ENCODE measurements at regions of chr2 and their contacts with region 1.

Region 1: DNA sequence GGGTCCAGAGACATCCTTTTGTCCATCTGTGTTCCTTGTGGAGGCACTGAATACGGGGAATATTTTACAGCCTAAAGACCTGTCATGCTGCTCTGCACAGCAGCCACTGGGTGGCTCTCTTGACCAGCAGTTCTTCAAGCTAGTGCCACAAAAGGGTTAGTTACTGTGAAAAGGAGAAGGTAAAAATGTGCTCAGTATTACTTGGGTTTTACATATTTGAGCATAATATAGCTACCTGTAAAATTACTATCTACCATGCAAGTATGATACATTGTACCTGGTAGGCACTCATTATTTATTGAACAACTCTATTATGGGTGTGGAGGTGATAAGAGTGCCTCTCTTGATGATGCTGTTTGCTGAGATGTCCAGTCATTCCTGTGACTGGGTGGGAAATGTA is 23.6 kb downstream of the FZD5 start:
- DNase-seq: peak in 8 of 14 experiments; percentile 20 to 71 (median 44)
- ATAC-seq: peak; percentile 63
- H3K4me3 ChIP-seq: no peak overlapping the region
- H3K4me3 Mint-ChIP-seq: no peak overlapping the region
- H3K27ac ChIP-seq: no peak overlapping the region
- H3K27ac Mint-ChIP-seq: no peak overlapping the region
- H3K4me1 ChIP-seq: no peaks in the 10 kb centered on the region
- H3K4me1 Mint-ChIP-seq: no peaks in the 10 kb centered on the region
- H3K27me3 ChIP-seq: no peaks in the 10 kb centered on the region
- H3K27me3 Mint-ChIP-seq: no peaks in the 10 kb centered on the region
- CTCF ChIP-seq: peak; percentile 77

Region 2: DNA sequence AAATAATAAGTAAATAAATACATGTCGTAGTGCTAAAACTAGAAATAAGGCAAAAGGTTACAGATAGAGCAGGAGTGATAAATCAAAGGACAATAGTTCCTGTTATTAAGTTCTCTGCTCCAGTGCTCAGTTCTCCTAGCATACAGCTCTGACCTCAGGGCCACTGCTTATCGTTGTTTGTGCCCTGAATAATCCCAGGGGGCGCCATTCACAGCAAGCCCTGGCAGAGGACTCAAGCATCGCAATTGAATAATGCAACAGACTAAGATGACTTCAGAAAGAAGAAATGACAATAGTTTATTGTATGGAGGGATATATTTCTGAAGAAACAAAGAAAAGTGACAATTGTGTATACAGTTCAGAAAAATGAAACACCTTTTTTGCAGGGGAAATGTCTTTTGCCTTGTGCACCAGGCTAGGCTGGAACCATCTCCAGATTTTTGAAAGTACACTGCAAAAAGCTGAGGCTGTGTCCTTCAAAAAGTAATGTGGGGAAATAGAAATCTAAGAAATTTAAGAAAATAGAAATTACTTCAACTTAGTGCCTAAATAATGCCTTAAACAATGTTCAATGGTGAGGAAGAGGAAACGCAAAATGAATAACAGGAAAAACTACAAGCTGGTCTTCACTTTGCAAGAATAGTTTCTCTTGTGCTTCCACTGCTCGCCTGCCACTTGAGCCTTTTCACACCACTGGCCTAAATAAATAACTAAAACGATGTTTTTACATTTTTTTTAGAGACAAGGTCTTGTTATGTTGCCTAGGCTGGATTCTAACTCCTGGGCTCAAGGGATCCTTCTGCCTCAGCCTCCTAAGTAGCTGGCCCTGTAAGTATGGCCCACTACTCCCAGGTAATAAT is 53.7 kb before region 1 on chr2:
- CTCF ChIA-PET with region 1: no interaction called
- POLR2A ChIA-PET with region 1: no interaction called
- intact Hi-C with region 1: loop called in 1 of 2 experiments (anchors 5 kb)
- DNase-seq: peak; percentile 16 to 73 (median 37)
- ATAC-seq: peak; percentile 60
- H3K4me3 ChIP-seq: no peak overlapping the region
- H3K4me3 Mint-ChIP-seq: no peak overlapping the region
- H3K27ac ChIP-seq: no peak overlapping the region
- H3K27ac Mint-ChIP-seq: no peak overlapping the region
- H3K4me1 ChIP-seq: no peaks in the 10 kb centered on the region
- H3K4me1 Mint-ChIP-seq: peaks cover 5% of the 10 kb centered on the region
- H3K27me3 ChIP-seq: no peaks in the 10 kb centered on the region
- H3K27me3 Mint-ChIP-seq: no peaks in the 10 kb centered on the region
- CTCF ChIP-seq: peak; percentile 73

Region 3: GRCh38 chr2:207782238-207783030 is 36.3 kb after region 1 on chr2:
- CTCF ChIA-PET with region 1: no interaction called
- POLR2A ChIA-PET with region 1: no interaction called
- intact Hi-C with region 1: no loop called
- DNase-seq: no peak
- ATAC-seq: no peak
- H3K4me3 ChIP-seq: no peak overlapping the region
- H3K4me3 Mint-ChIP-seq: no peak overlapping the region
- H3K27ac ChIP-seq: no peak overlapping the region
- H3K27ac Mint-ChIP-seq: no peak overlapping the region
- H3K4me1 ChIP-seq: no peaks in the 10 kb centered on the region
- H3K4me1 Mint-ChIP-seq: no peaks in the 10 kb centered on the region
- H3K27me3 ChIP-seq: no peaks in the 10 kb centered on the region
- H3K27me3 Mint-ChIP-seq: no peaks in the 10 kb centered on the region
- CTCF ChIP-seq: no peak

Region 4: GRCh38 chr2:207974216-207974605 is 228.1 kb after region 1 on chr2:
- CTCF ChIA-PET with region 1: no interaction called
- POLR2A ChIA-PET with region 1: no interaction called
- intact Hi-C with region 1: loop called (anchors 1 to 2 kb)
- DNase-seq: peak in 2 of 14 experiments; percentile 4 to 8
- ATAC-seq: no peak
- H3K4me3 ChIP-seq: no peak overlapping the region
- H3K4me3 Mint-ChIP-seq: no peak overlapping the region
- H3K27ac ChIP-seq: no peak overlapping the region
- H3K27ac Mint-ChIP-seq: no peak overlapping the region
- H3K4me1 ChIP-seq: no peaks in the 10 kb centered on the region
- H3K4me1 Mint-ChIP-seq: peaks cover 44% of the 10 kb centered on the region
- H3K27me3 ChIP-seq: no peaks in the 10 kb centered on the region
- H3K27me3 Mint-ChIP-seq: no peaks in the 10 kb centered on the region
- CTCF ChIP-seq: no peak

Region 5: DNA sequence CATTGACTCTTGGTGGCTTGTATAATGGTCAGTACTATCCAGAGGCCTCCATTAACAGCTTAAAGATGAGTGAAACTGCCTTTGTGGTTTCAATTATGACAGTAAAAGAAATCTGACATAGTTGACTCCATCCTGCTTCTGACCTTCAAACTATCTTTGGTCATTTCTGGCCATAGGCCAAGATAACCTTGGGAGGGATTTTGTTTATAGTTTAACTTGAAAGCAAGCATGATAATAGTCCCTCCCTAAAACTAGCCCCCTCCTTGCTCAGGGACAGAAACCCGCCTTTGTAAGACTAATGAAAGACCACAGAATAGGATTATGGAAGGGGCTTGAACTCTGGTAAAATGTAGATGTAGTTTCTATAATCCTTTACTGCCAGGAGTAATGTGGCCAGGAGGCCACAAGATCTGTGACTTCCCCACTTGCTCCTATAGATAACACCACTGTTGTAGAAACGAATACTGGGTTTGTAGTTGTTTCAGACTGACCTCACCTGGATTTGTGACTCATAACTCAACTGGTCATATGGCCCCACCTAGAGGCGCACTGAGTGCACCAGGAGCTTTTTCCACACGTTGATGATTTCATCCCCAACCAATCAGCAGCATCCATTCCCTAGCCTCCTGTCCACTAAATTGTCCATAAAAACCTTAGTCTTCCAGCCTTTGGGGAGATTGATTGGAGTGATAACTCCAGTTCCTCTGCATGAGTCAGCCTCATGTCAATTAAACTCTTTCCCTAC is 287.8 kb after region 1 on chr2:
- CTCF ChIA-PET with region 1: interaction called, 3 read pairs
- POLR2A ChIA-PET with region 1: no interaction called
- intact Hi-C with region 1: loop called in 1 of 2 experiments (anchors 1 kb)
- DNase-seq: peak in 9 of 14 experiments; percentile 4 to 62 (median 17)
- ATAC-seq: peak; percentile 56
- H3K4me3 ChIP-seq: no peak overlapping the region
- H3K4me3 Mint-ChIP-seq: no peak overlapping the region
- H3K27ac ChIP-seq: no peak overlapping the region
- H3K27ac Mint-ChIP-seq: no peak overlapping the region
- H3K4me1 ChIP-seq: no peaks in the 10 kb centered on the region
- H3K4me1 Mint-ChIP-seq: no peaks in the 10 kb centered on the region
- H3K27me3 ChIP-seq: no peaks in the 10 kb centered on the region
- H3K27me3 Mint-ChIP-seq: no peaks in the 10 kb centered on the region
- CTCF ChIP-seq: peak; percentile 40

Region 6: DNA sequence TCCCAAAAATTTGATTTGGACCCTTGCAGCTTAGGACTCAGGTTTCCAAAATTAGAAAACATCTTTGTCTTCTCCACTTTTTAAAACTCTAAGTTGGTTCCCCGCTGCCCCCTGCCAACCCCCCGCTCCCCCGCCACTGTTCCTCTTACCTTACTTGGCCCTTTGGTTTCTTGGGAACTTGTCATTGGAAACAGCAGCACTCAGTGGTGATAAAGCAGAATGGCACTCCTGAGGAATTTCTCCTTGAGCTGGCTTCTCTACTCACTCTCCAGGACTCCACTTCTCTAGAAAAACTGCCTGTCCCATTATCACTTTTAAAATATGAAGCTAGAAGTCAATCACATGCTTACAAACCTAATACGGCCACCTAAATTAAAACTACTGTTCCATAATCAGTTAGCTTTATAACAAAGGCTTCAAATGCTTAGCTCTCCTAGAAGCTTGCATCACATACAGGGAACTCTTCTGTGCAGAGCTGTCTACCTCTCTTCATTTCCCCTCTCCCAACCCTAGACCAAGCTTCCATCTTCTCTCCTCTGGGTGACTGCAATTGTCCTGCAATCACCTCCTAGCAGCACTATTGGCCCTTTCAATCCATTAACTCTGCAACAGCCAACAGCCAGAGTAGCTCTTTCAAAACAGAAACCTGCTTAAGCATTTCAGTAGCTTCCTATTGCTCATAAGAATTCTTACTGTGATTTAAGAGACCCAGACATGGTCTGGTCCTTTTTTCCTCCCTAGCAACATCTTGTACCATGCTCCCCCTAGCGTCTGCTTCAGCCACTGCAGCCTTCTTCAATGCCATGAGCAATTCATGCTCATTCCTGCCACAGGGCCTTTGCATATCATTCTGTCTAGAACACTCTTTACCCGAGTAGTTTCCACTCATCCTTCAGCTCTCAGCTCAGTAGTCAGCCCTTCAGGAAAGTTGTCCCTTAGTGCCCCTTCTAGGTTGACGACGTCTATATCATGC is 294.4 kb after region 1 on chr2:
- CTCF ChIA-PET with region 1: interaction called, 4 read pairs
- POLR2A ChIA-PET with region 1: interaction called, 3 read pairs
- intact Hi-C with region 1: loop called (anchors 1 kb)
- DNase-seq: peak; percentile 41 to 76 (median 54)
- ATAC-seq: peak; percentile 74
- H3K4me3 ChIP-seq: no peak overlapping the region
- H3K4me3 Mint-ChIP-seq: no peak overlapping the region
- H3K27ac ChIP-seq: no peak overlapping the region
- H3K27ac Mint-ChIP-seq: no peak overlapping the region
- H3K4me1 ChIP-seq: no peaks in the 10 kb centered on the region
- H3K4me1 Mint-ChIP-seq: no peaks in the 10 kb centered on the region
- H3K27me3 ChIP-seq: no peaks in the 10 kb centered on the region
- H3K27me3 Mint-ChIP-seq: no peaks in the 10 kb centered on the region
- CTCF ChIP-seq: peak; percentile 62

Region 7: GRCh38 chr2:208072250-208072892 is 326.2 kb after region 1 on chr2:
- CTCF ChIA-PET with region 1: interaction called, 11 read pairs
- POLR2A ChIA-PET with region 1: no interaction called
- intact Hi-C with region 1: loop called (anchors 1 to 2 kb)
- DNase-seq: peak; percentile 21 to 73 (median 42)
- ATAC-seq: peak; percentile 70
- H3K4me3 ChIP-seq: no peak overlapping the region
- H3K4me3 Mint-ChIP-seq: no peak overlapping the region
- H3K27ac ChIP-seq: no peak overlapping the region
- H3K27ac Mint-ChIP-seq: no peak overlapping the region
- H3K4me1 ChIP-seq: no peaks in the 10 kb centered on the region
- H3K4me1 Mint-ChIP-seq: no peaks in the 10 kb centered on the region
- H3K27me3 ChIP-seq: no peaks in the 10 kb centered on the region
- H3K27me3 Mint-ChIP-seq: peaks cover 16% of the 10 kb centered on the region
- CTCF ChIP-seq: peak; percentile 76

Measured in CD4-positive, alpha-beta T cell (primary cell).